HEK293 (cell line): ENCODE measurements at regions of chr11 and their contacts with region 1.

Region 1: GRCh38 chr11:124875943-124876817 is 10.9 kb downstream of the ROBO3 start:
- H3K4me3 ChIP-seq: peak overlapping the region; percentile 49
- H3K27ac ChIP-seq: peak overlapping the region; percentile 57
- H3K4me1 ChIP-seq: no peaks in the 10 kb centered on the region
- CTCF ChIP-seq: peak; percentile 81

Region 2: DNA sequence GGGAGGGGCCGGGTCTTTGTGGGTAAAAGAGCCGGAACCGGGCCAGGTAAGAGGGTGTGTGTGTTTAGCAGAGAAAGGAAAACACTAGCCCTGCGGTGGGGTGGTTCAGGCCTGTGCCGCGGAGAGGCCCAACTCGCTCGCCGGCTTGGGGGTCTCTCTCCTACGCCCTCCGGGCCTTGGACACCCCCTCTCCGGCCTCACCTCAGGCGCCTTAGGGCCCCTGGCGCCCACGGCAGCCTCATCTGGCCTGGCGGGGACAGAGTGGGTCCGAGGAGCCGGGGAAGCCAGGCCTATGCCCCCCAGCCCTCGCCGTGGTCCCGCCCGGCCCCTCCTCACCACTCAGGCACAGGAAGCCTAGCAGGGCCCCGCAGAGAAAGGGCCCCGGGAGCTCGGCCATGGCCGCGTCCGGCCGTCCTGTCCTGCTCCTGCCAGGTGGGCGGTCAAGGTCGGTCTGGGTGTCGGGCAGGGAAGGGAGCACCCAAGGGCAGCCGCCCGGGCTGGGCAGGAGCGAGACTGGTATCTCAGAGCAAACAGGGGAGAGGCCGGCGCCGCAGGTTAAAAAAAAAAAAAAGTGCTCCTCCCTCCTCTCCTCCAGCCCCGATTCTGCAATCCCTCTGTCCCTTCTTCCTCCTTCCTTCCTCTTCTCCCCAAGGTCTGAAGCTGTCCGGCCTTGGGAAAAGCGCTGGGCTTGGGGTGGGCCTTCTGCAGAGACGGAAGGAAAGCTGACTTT is 124.3 kb before region 1 on chr11 and contains the start of gene VSIG2:
- CTCF ChIA-PET with region 1: no interaction called
- POLR2A ChIA-PET with region 1: no interaction called
- H3K4me3 ChIP-seq: no peak within 1 kb of the TSS
- H3K27ac ChIP-seq: no peak within 1 kb of the TSS
- H3K4me1 ChIP-seq: no peaks in the 10 kb centered on the region
- CTCF ChIP-seq: no peak

Region 3: DNA sequence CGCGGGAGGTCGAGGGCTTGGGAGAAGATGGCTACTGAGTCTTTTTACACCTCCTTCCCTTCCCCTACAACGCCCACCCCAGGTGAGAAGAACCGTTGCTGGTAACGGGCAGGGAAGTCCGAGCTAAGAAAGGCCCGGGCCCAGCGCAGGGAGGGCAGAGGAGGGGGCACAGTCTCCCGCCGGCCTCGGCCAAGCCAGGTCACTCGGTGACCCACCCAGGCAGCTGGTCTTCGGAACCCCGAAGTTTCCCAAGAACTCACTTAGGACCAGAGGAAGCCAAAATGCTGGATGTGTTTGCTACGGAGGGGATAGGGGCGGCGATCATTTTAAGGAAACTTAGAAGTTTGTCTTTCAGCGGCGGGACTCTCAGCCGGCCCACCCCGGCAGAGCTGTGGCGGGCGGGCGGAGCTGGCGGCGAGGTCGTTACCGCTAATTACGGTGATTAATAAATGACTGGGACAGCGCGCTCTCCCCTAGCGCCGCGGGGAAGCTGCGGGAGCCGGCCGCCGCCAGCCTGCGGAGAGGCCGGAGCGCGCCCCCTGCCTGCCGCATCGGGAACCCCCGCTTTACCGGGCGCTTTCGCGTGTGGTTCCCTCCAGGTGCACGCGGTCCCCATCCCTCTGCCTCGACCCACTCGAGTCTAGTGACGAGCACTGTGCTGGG is 10.1 kb before region 1 on chr11:
- CTCF ChIA-PET with region 1: interaction called, 34 read pairs
- POLR2A ChIA-PET with region 1: interaction called, 9 read pairs
- H3K4me3 ChIP-seq: peak overlapping the region; percentile 13
- H3K27ac ChIP-seq: no peak overlapping the region
- H3K4me1 ChIP-seq: no peaks in the 10 kb centered on the region
- CTCF ChIP-seq: peak; percentile 66; the same call in 1 of the 2 replicates

Region 4: DNA sequence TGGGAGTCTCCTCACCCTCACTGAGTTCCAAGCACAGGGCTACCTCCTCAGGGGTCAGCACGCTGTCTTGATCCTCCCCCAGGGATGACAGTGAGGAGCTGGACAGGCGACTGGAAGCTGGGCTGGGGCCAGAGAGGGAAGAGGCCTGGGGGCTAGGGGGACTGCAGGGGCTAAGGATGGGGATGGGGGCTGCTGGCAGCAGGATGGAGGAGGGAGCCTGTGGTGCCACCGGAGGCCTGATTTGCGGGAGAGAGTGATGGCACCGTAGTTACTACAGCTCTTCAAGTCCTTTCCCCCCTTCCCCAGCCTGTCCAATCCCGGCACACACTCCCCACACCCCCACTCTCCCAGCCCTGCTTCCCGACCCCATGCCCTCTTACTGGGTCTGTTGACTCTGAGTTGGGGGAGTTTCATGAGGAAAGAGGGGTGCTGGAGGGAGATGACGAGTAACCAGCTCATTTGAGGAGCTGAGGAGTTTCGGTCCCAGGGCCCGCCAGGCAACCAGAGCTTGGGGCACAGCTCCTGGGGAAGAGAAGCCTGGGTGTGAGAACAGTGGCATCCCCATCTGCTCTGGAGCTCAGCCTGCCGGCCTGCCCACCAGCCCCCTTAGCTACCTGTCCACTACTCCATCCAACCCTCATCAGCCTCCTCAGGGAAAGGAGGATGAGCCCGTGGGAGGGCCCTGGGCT is 10.9 kb after region 1 on chr11:
- CTCF ChIA-PET with region 1: interaction called, 10 read pairs
- POLR2A ChIA-PET with region 1: interaction called, 6 read pairs
- H3K4me3 ChIP-seq: no peak overlapping the region
- H3K27ac ChIP-seq: no peak overlapping the region
- H3K4me1 ChIP-seq: no peaks in the 10 kb centered on the region
- CTCF ChIP-seq: no peak

Region 5: GRCh38 chr11:124898711-124899110 is 22.5 kb after region 1 on chr11:
- CTCF ChIA-PET with region 1: interaction called, 9 read pairs
- POLR2A ChIA-PET with region 1: interaction called, 12 read pairs
- H3K4me3 ChIP-seq: no peak overlapping the region
- H3K27ac ChIP-seq: no peak overlapping the region
- H3K4me1 ChIP-seq: no peaks in the 10 kb centered on the region
- CTCF ChIP-seq: no peak

Region 6: DNA sequence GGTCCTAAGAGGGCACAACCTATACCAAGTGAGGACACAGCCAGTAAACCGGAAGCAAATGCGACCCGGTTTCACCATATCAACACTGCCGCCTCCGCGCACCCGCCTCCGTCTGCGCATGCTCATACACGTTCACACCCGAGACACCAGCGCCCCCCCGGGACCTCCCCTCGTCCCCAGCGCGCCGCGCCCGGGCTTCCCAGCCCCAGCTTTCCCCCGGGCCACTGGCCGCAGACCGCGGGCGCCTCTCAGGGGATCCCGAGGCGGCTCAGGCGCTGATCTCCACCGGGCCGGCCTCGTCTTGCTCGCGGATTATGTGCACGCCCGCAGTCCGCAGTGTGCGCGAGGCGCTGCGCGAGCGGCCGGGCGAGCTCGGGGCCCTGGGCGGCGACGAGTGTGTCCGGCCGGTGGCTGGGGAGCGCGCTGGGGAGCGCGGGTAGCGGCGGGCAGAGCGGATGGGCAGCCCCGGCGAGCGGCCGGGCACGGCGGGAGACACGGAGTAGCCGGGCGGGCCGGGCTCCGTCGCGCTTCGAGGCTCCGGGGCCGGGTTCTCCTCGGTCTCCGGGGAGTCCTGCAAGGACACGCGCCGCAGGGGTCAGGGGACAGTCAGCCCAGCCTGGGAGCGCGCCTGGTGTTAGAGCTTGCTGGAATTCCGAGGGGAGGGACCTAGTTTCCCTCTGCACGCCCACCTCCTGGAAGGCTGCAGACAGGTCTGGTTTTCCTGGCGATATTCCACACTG is 44.9 kb after region 1 on chr11:
- CTCF ChIA-PET with region 1: interaction called, 6 read pairs
- POLR2A ChIA-PET with region 1: interaction called, 11 read pairs
- H3K4me3 ChIP-seq: peak overlapping the region; percentile 27
- H3K27ac ChIP-seq: peak overlapping the region; percentile 64; the same call in 1 of the 2 replicates
- H3K4me1 ChIP-seq: no peaks in the 10 kb centered on the region
- CTCF ChIP-seq: no peak

Region 7: DNA sequence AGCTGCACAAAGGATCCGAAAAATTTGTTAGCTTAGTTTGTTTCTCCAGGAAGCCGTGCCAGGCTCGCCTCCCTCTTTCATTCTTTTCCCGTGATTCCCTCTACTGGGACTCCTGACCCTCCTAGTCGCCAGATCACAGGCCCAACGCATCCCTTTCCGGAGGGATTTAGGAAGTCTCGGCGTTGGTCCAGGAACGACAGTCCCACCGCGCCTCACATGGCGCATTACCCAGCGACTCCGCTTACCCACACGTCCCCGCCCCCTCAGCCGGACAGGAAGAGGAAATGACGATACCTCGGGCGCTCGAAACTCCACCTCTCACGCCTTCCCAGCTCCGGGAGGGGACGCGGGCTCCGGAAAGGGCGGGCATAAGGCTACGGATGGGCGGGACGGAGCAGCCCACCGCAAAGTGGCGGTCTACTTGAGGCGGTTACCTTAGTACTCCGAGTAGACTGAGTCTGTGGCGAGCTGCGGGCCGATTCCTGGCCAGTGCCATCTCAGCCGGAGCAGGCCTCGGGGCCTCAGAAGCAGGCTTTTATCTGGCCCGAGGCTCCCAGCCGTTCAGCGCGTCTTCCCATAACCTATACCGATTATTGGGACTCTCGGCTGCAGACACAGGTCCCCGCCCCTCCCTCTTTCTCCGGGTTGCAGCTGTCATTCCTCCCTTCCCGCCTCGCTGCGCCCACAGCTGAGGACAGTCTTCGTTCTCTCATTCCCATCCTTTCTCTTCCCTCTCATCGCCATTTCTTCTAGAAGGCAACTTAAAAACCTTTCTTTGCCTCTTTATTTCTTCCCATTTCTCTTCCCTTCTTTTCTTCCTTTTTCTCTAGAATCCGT is 77.8 kb after region 1 on chr11 and contains the start of gene CCDC15:
- CTCF ChIA-PET with region 1: interaction called, 3 read pairs
- POLR2A ChIA-PET with region 1: interaction called, 18 read pairs
- H3K4me3 ChIP-seq: peak within 1 kb of the TSS; percentile 75
- H3K27ac ChIP-seq: peak within 1 kb of the TSS; percentile 47; the same call in 1 of the 2 replicates
- H3K4me1 ChIP-seq: no peaks in the 10 kb centered on the region; the same call in 1 of the 2 replicates
- CTCF ChIP-seq: no peak

Region 8: GRCh38 chr11:124988063-124988462 is 111.9 kb after region 1 on chr11:
- CTCF ChIA-PET with region 1: interaction called, 10 read pairs
- POLR2A ChIA-PET with region 1: no interaction called
- H3K4me3 ChIP-seq: no peak overlapping the region
- H3K27ac ChIP-seq: no peak overlapping the region
- H3K4me1 ChIP-seq: no peaks in the 10 kb centered on the region
- CTCF ChIP-seq: no peak